HEK293T (cell line): ENCODE measurements at regions of chr5 and their contacts with region 1.

Region 1: DNA sequence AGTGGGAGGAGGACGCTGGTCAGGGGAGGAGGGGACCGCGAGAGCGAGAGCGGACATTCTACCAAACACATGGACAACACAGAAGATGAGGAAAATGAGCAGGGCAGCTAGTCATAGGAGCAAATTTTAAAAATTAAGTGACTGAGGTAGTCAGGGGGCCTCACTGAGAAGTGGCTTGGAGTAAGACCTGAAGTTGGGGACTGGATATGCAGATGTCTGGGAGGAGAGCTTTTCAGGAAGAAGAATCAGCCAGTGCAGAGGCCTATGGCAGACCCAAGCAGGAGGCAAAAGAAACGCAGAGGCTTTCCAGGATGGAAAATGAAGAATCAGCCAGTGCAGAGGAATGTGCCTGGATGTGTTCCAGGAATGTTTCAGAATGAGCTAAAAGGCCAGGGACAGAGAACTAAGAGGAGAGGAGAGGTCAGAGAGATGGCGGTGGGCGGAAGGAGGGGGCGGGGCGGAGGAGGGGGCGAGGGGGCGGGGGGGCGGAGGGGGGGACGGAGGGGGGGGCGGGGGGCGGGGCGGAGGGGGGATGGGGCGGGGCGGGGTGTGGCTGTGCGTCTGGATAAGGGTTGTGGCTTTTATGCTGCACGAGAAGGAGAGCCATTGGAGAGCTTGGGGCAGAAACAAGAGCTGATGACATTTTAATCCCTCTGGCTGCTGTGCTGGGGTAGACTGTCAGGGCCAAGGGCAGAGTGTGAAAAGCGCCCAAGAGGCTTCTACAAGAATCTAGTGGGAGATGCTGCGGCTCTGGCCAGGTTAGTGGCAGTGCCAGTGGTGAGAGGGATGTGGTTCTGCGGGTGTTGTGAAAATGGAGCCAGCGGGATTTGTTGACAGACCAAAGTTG is 129.6 kb downstream of the KCNIP1 start:
- DNase-seq: peak; percentile 93

Region 2: DNA sequence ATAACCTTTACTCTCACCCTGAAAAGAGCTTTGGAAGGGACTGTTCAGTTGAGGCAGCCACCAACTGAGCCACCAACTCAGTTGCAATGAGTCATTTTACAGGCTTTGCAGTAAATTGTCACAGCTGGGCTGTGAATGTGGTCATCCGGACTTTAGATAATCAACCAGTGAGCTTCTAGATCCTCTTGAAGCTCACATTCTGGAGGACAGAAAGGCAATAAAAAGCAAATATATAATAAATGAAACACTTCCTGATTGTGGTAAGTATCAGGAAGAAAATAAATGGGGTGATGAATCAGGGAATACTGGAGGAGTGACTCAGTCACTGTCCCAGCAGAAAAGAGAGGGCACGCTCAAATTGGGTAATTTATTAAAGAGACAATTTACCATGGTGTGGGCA is 413.8 kb before region 1 on chr5:
- CTCF ChIA-PET with region 1: no interaction called
- POLR2A ChIA-PET with region 1: no interaction called
- DNase-seq: no peak

Region 3: GRCh38 chr5:170426149-170426767 is 207.2 kb before region 1 on chr5:
- CTCF ChIA-PET with region 1: interaction called, 18 read pairs
- POLR2A ChIA-PET with region 1: interaction called, 4 read pairs
- DNase-seq: no peak

Region 4: DNA sequence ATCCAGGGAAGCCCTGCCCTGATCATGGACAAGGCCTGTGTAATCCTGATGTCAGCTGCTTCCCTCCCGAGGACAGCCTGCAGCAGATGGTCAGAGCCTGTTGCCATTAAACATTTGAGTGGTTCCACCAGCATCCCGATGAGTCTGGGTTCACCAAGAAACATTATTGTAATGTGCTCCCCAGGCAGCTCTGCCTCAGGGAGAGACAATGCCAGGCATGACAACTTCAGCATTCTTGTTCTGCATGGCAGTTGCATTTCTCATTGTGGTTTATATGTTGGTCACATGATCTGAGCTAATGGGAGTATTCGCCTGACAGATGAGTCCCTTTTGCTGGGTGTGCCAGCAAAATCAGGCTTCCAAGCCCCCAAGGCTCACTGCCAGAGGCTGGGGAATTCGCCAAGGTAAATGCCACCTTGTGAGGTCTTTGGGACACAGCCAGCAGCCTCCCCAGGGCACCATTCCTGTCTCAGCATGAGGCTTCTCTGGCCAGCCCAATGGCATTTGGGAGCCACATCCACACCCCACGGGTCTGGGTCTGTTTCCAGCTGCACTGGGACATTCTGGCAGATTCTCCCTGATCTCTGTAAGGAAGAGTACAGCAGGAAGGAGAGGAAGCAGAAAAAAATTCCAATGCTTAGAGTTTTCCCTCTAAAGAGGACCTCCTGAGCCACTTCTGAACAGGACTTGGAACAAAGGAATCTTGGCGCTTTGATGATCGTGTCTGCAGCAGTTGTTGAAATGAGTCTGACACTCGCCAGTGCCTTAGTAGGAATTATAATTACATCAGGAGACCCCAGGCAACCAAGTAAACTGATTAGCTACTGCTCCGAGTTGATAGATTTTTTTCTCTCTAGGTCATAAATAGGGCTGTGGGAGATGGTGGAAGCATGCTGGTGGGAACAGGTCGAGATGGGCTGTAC is 111.0 kb before region 1 on chr5:
- CTCF ChIA-PET with region 1: no interaction called
- POLR2A ChIA-PET with region 1: no interaction called
- DNase-seq: no peak

Region 5: GRCh38 chr5:170597109-170597751 is 36.2 kb before region 1 on chr5:
- CTCF ChIA-PET with region 1: interaction called, 12 read pairs
- POLR2A ChIA-PET with region 1: interaction called, 9 read pairs
- DNase-seq: no peak